RWPE1 (cell line): ENCODE measurements at regions of chr9 and their contacts with region 1.

Region 1: DNA sequence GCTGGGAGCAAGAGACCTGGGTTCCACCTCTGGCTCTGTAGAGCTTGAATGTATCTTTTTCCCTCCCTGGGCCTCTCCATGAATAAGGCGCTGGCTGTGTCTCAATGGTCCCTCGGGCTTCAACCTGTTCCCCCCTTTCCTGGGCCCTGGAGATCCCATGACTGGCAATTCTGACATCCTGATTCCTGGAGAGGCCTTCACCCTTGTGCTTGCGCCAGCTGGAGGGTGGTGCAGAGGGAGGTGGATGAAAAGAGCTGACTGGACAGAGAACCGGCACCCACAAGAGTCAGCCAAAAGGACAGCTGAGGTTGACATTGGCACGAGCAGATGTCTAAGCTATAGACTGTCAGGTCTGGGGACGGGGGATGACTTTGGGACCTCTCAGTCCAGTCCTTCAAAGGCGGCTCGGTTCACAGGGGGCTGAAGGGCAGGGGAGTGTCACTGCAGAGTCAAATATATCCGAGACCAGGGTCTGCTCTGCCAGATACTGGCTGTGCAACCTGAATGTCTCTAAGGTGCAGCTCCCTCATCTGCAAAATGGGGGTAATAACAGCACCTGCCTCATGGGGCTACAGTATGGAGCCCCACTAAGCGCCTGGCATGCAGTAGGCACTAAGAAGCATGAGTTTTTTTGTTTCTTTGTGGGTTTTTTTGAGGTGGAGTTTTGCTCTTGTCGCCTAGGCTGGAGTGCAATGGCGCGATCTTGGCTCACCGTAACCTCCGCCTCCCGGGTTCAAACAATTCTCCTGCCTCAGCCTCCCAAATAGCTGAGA is 13.8 kb downstream of the DNM1 start:
- DNase-seq: no peak
- H3K27ac ChIP-seq: peak overlapping the region; percentile 59; the same call in 1 of the 2 replicates
- CTCF ChIP-seq: no peak

Region 2: DNA sequence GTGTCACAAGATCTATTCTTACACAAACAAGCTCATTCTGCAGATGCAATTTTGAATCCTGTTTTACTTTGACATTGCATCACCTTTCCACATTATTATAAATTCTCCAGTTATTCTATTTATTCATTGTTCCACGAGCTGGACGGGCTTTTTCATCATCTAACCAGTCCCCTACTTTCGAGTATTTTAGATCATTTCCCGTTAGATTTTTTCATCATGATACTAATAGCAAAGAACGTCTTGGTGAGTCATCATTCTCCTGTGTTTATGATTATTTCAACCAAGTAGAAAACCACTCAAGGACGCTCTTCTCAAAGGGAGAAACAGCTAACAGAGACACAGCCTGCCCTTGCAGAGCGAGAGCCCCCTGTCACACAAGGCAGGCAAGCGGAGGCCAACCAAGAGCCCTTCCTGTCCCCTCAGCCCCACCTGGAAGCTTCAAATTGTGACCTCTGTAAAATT is 41.8 kb before region 1 on chr9:
- CTCF ChIA-PET with region 1: interaction called, 3 read pairs
- POLR2A ChIA-PET with region 1: interaction called, 11 read pairs
- DNase-seq: no peak
- H3K27ac ChIP-seq: peak overlapping the region; percentile 52
- CTCF ChIP-seq: no peak

Region 3: DNA sequence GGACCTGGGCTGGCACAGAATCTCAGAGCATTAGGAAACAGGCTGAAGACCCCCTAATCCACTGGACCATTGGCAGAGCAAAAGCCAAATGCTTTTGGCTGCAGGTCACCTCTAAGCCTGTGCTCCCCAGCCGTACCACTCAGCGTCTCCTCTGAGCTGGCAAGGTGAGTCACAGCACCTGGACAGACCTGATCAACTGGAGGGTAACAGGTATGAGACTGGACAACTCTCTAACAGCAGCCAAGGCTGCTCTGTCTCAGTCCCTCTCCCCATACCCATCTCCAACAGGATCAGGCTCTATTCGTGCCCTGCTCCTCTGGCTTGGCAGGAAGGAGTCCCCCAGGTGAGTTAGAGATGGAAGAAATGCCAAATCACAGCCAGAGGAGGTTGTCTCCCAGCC is 54.1 kb after region 1 on chr9:
- CTCF ChIA-PET with region 1: no interaction called
- POLR2A ChIA-PET with region 1: no interaction called
- DNase-seq: peak; percentile 92
- H3K27ac ChIP-seq: peak overlapping the region; percentile 22
- CTCF ChIP-seq: no peak